Activated T-helper 1 cell treated with anti-CD3 and anti-CD28 coated beads, Interleukin-12 subunit alpha, Interleukin-12 subunit beta, Interleukin-2, Interleukin-4 antibody, amounts not matched to agents 30 ng/mL and 10 ng/mL and 1 ng/mL, durations not matched to agents 14 hours and 24 hours and 36 hours (primary cell): ENCODE measurements at regions of chr4 and their contacts with region 1.

Region 1: DNA sequence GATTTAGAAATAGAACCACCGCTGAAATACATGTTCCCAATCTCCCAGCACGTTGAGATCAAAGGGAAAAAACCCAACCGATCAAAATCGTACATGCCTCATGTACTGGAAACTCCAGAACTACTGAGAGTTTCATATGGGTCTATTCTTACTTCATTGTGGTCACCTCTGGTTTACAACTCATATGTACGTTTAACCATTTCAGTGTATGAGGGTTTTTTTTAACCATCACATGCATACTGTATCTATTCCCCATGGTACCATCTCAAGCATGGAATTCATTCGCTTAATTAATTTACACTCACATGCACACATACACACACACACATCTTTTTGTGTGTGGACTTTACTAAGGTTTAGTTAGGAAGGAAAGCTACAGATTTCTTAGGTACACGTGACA is 46.0 kb upstream of the CLNK start:
- DNase-seq: no peak
- H3K4me3 Mint-ChIP-seq: peak overlapping the region; percentile 42
- H3K27ac Mint-ChIP-seq: peak overlapping the region; percentile 90
- H3K4me1 Mint-ChIP-seq: peaks cover 86% of the 10 kb centered on the region
- H3K27me3 Mint-ChIP-seq: no peaks in the 10 kb centered on the region

Region 2: DNA sequence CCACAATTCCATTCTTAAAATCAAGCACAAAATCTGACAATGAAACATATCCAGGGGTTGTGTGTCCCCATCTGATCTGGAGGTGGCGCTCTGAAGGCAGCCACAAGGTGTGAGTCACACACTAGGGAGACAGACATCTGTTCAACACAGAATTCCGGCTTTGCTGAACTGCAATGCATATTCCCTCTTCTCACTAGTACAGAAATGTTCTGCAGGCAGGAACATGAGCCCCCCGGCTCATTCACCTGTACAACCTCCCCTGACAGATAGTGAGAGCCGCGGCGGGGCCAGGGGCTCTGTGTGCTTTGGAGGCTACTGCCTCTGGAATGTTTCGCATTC is 655.9 kb before region 1 on chr4:
- intact Hi-C with region 1: no loop called
- DNase-seq: no peak
- H3K4me3 Mint-ChIP-seq: no peak overlapping the region
- H3K27ac Mint-ChIP-seq: no peak overlapping the region
- H3K4me1 Mint-ChIP-seq: no peaks in the 10 kb centered on the region
- H3K27me3 Mint-ChIP-seq: no peaks in the 10 kb centered on the region

Region 3: GRCh38 chr4:10096201-10096977 is 634.2 kb before region 1 on chr4:
- intact Hi-C with region 1: loop called (anchors 1 kb)
- DNase-seq: peak; percentile 72
- H3K4me3 Mint-ChIP-seq: peak overlapping the region; percentile 62
- H3K27ac Mint-ChIP-seq: peak overlapping the region; percentile 99
- H3K4me1 Mint-ChIP-seq: peaks cover 94% of the 10 kb centered on the region
- H3K27me3 Mint-ChIP-seq: no peaks in the 10 kb centered on the region

Region 4: DNA sequence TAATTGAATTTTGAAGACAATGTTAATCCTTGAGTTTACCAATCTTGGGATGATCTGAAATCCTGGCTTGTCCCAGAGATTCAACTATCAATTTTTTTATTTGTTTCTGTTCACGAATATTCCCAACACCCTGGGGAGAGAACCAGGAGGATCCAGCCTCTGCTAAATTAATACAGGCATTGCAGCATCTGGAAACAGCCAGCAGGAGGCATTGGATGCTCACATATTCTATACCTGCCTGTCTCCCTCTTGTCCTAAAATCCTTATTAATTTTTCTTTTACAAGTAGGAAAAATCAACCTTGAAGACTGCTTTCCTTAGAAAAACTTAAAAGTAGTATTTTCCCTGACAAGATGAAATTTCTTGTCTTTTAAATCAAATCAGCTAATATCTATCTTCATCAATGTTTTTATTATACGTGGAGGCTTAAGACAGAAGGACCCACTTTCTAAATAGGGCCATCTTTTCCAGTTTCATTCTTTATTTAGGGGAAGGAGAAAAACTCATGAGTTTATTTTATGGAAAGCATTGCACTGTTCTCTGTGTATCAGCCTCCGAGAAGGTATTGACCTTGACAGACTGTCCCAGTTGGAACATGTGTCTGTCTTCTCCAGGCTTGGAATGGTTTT is 148.4 kb before region 1 on chr4:
- intact Hi-C with region 1: loop called (anchors 2 kb)
- DNase-seq: no peak
- H3K4me3 Mint-ChIP-seq: no peak overlapping the region
- H3K27ac Mint-ChIP-seq: no peak overlapping the region
- H3K4me1 Mint-ChIP-seq: peaks cover 13% of the 10 kb centered on the region
- H3K27me3 Mint-ChIP-seq: peaks cover 2% of the 10 kb centered on the region

Region 5: GRCh38 chr4:10741961-10742699 is 11.5 kb after region 1 on chr4:
- intact Hi-C with region 1: loop called (anchors 1 kb)
- DNase-seq: no peak
- H3K4me3 Mint-ChIP-seq: no peak overlapping the region
- H3K27ac Mint-ChIP-seq: peak overlapping the region; percentile 35
- H3K4me1 Mint-ChIP-seq: peaks cover 25% of the 10 kb centered on the region
- H3K27me3 Mint-ChIP-seq: peaks cover 2% of the 10 kb centered on the region

Region 6: DNA sequence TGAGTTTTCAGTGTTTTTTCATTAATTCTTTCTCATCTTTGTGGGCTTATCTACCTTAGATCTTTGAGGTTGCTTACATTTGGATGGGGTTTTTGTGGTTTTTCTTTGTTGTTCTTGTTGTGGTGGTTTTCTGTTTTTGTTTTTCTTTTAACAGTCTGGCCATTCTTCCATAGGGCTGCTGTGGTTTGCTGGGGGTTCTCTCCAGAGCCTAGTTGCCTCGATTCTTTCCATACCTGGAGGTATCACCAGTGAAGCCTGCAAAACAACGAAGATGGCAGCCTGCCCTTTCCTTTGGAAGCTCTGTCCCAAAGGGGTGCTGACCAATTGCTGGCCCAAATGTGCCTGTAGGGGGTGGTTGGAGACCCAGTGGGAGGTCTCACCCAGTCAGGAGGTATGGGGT is 122.6 kb after region 1 on chr4:
- intact Hi-C with region 1: loop called (anchors 2 kb)
- DNase-seq: no peak
- H3K4me3 Mint-ChIP-seq: no peak overlapping the region
- H3K27ac Mint-ChIP-seq: peak overlapping the region; percentile 61
- H3K4me1 Mint-ChIP-seq: peaks cover 12% of the 10 kb centered on the region
- H3K27me3 Mint-ChIP-seq: peaks cover 3% of the 10 kb centered on the region

Region 7: DNA sequence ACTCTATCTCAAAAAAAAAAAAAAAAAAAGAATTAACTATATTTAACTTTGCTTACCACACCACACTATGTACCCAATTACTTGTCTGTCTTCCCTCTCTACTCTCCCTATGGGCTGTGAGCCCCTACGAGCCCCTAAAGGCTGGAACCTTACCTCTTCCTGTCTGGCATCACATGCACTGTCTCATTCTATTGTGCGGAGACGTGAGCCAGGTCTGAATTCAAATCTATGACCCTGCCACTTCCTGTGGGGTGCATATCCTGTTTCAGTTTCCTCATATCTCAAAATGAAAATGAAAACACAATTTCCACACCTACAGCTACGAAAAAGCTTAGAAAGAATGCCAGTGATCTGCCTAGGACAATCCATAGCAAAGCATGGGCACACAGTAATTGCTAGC is 741.0 kb after region 1 on chr4:
- intact Hi-C with region 1: loop called (anchors 2 kb)
- DNase-seq: peak; percentile 57
- H3K4me3 Mint-ChIP-seq: peak overlapping the region; percentile 69
- H3K27ac Mint-ChIP-seq: peak overlapping the region; percentile 90
- H3K4me1 Mint-ChIP-seq: peaks cover 46% of the 10 kb centered on the region
- H3K27me3 Mint-ChIP-seq: no peaks in the 10 kb centered on the region